HepG2 (cell line): ENCODE measurements at regions of chr2 and their contacts with region 1.

Region 1: DNA sequence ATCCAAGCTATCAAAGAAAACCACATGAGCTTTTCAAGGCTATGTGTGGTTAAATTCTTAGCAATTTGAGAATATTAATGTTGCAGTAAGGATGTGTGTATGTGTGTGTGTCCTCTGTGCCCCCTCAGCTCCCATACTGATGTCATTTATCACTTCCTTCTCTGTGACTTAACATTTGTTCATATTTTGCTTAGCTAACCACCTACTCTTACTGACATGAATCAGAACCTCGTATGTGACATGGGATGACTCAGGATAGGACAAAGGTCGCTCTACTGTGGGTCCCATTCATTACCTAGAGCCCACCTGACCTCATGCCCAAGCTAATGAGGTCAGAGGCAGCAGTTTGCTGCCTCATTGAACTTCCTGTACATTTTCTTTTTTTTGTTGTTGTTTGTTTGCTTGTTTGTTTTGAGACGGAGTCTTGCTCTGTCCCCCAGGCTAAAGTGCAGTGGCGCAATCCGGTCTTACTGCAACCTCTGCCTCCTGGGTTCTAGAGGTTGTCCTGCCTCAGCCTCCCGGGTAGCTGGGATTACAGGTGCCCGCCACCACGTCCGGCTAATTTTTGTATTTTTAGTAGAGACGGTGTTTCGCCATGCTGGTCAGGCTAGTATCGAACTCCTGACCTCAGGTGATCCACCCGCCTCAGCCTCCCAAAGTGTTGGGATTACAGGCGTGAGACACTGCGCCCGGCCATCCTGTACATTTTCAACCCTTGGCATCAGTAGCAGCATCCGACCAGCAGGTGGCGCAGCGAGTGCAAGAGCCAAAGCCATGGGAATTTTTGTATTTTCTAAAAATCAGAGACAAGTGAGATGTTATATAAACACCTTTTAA is 36.4 kb downstream of the MOGAT1 start:
- DNase-seq: peak; percentile 83
- ATAC-seq: peak; percentile 6; the same call in 2 of the 3 replicates
- H3K4me3 ChIP-seq: peak overlapping the region in 2 of 3 experiments; percentile 28 to 50; a peak in 3 of 6 replicates
- H3K27ac ChIP-seq: peak overlapping the region; percentile 47
- H3K4me1 ChIP-seq: peaks cover 55% of the 10 kb centered on the region
- H3K27me3 ChIP-seq: no peaks in the 10 kb centered on the region
- CTCF ChIP-seq: peak; percentile 94
- EP300 ChIP-seq: peak in 1 of 2 experiments; percentile 56; a peak in 3 of 4 replicates
- POLR2A ChIP-seq: no peak
- RAD21 ChIP-seq: peak; percentile 95

Region 2: GRCh38 chr2:222057347-222058073 is 650.4 kb before region 1 on chr2:
- CTCF ChIA-PET with region 1: no interaction called
- POLR2A ChIA-PET with region 1: no interaction called
- in situ Hi-C with region 1: no loop called
- intact Hi-C with region 1: no loop called
- DNase-seq: no peak
- ATAC-seq: peak; percentile 50; the same call in 2 of the 3 replicates
- H3K4me3 ChIP-seq: no peak overlapping the region
- H3K27ac ChIP-seq: no peak overlapping the region
- H3K4me1 ChIP-seq: no peaks in the 10 kb centered on the region
- H3K27me3 ChIP-seq: peaks cover 0 to 17% of the 10 kb centered on the region in 2 experiments; a peak in 2 of 5 replicates
- CTCF ChIP-seq: peak; percentile 70
- EP300 ChIP-seq: no peak
- POLR2A ChIP-seq: no peak
- RAD21 ChIP-seq: peak; percentile 22; the same call in 1 of the 2 replicates

Region 3: DNA sequence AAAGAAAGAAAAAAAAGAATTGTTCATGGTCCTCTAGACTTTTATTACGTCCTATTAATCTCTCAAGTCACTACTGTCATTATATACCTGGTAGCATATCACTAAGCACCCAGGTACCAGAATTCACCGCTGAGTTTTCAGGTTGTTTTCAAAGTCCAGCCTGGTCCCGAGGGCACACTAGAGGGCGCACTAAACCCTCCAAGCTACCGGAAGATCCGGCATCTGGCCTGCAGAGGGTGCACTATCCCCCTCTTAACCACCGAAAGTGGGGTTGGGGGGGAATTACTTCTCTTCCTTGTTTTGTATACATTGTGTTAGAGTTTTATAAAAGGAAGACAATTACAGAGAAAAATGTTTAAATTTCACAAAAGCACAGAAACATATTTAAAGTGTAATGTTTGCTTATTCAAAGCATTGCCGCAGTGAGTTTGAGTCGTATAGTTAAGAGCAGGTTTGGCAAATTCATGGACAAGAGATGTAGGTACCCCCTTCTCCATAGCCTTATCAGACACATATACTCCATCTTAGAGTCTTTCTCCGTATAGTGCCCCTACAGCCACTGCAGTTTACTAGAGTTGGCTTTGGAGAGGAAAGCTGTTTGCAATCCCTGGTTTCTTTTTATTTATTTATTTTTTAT is 17.2 kb before region 1 on chr2:
- CTCF ChIA-PET with region 1: interaction called, 7 read pairs
- POLR2A ChIA-PET with region 1: interaction called, 3 read pairs
- in situ Hi-C with region 1: no loop called
- intact Hi-C with region 1: loop called (anchors 2 kb)
- DNase-seq: peak; percentile 81
- ATAC-seq: peak; percentile 92
- H3K4me3 ChIP-seq: no peak overlapping the region
- H3K27ac ChIP-seq: no peak overlapping the region
- H3K4me1 ChIP-seq: peaks cover 12% of the 10 kb centered on the region
- H3K27me3 ChIP-seq: no peaks in the 10 kb centered on the region
- CTCF ChIP-seq: peak; percentile 99
- EP300 ChIP-seq: peak in 1 of 2 experiments; percentile 20; a peak in 1 of 4 replicates
- POLR2A ChIP-seq: no peak
- RAD21 ChIP-seq: peak; percentile 97

Region 4: GRCh38 chr2:222753251-222753824 is 45.4 kb after region 1 on chr2:
- CTCF ChIA-PET with region 1: no interaction called
- POLR2A ChIA-PET with region 1: interaction called, 6 read pairs
- in situ Hi-C with region 1: no loop called
- intact Hi-C with region 1: loop called (anchors 5 kb)
- DNase-seq: no peak
- ATAC-seq: peak; percentile 77
- H3K4me3 ChIP-seq: peak overlapping the region in 2 of 3 experiments; percentile 8 to 20; a peak in 2 of 6 replicates
- H3K27ac ChIP-seq: peak overlapping the region; percentile 16
- H3K4me1 ChIP-seq: peaks cover 61% of the 10 kb centered on the region
- H3K27me3 ChIP-seq: no peaks in the 10 kb centered on the region
- CTCF ChIP-seq: no peak
- EP300 ChIP-seq: no peak; a peak in 1 of 4 replicates
- POLR2A ChIP-seq: no peak
- RAD21 ChIP-seq: no peak

Region 5: GRCh38 chr2:222805541-222806304 is 97.8 kb after region 1 on chr2:
- CTCF ChIA-PET with region 1: no interaction called
- POLR2A ChIA-PET with region 1: interaction called, 44 read pairs
- in situ Hi-C with region 1: no loop called
- intact Hi-C with region 1: no loop called
- DNase-seq: peak; percentile 74
- ATAC-seq: peak; percentile 93
- H3K4me3 ChIP-seq: peak overlapping the region; percentile 29 to 52 (median 34)
- H3K27ac ChIP-seq: peak overlapping the region; percentile 81
- H3K4me1 ChIP-seq: peaks cover 49% of the 10 kb centered on the region
- H3K27me3 ChIP-seq: no peaks in the 10 kb centered on the region
- CTCF ChIP-seq: peak; percentile 21; the same call in 1 of the 2 replicates
- EP300 ChIP-seq: peak in 1 of 2 experiments; percentile 89; a peak in 2 of 4 replicates
- POLR2A ChIP-seq: peak in 1 of 2 experiments; percentile 25; a peak in 1 of 4 replicates
- RAD21 ChIP-seq: no peak

Region 6: DNA sequence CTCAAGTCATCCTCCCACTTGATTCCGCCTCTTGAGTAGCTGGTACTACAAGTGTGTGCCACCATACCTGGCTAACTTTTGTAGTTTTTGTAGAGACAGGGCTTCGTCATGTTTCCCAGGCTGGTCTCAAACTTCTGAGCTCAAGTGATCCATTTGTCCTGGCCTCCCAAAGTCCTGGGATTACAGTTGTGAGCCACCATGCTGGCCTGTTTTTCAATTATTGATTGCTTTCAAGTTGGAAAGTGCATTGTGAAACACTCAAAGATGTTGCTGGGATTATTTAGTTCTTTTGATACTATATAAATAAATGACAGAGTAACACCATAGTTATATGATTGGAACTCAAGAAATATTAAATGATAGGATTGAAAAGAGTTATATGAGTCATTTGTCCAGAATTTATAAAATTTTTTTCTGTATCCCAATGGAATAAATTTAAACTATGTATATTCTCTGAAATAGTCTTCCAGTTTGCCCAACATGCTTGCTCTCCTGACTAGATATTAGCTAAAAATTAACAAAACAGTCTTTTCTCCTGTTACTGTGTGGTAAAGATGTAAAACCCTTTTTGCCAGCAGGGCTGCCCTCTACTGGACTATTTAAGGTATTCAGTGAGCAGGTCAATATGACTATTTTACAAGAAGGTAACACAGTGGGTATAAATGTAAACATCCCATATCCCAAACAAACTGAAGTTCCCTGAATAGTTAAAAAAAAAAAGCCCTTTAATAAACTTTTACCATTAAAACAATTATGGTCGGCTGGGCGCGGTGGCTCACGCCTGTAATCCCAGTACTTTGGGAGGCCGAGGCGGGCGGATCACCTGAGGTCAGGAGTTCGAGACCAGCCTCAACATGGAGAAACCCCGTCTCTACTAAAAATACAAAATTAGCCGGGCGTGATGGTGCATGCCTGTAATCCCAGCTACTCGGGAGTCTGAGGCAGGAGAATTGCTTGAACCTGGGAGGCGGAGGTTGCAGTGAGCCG is 195.6 kb after region 1 on chr2:
- CTCF ChIA-PET with region 1: interaction called, 40 read pairs
- POLR2A ChIA-PET with region 1: interaction called, 23 read pairs
- in situ Hi-C with region 1: no loop called
- intact Hi-C with region 1: loop called (anchors 1 kb)
- DNase-seq: peak; percentile 86
- ATAC-seq: peak; percentile 76
- H3K4me3 ChIP-seq: no peak overlapping the region
- H3K27ac ChIP-seq: peak overlapping the region; percentile 48
- H3K4me1 ChIP-seq: peaks cover 100% of the 10 kb centered on the region
- H3K27me3 ChIP-seq: no peaks in the 10 kb centered on the region
- CTCF ChIP-seq: peak; percentile 81
- EP300 ChIP-seq: peak in 1 of 2 experiments; percentile 33; a peak in 1 of 4 replicates
- POLR2A ChIP-seq: no peak
- RAD21 ChIP-seq: peak; percentile 89